ENCODE measurements at regions of chr13 and their contacts with region 1.

Region 1: GRCh38 chr13:112606109-112607001 is 18.4 kb upstream of the TUBGCP3 start:
- DNase-seq: peak; percentile 82

Region 2: GRCh38 chr13:112587212-112587763 is 19.1 kb before region 1 on chr13:
- CTCF ChIA-PET with region 1: interaction called, 4 read pairs
- POLR2A ChIA-PET with region 1: interaction called, 20 read pairs
- DNase-seq: peak; percentile 62

Region 3: DNA sequence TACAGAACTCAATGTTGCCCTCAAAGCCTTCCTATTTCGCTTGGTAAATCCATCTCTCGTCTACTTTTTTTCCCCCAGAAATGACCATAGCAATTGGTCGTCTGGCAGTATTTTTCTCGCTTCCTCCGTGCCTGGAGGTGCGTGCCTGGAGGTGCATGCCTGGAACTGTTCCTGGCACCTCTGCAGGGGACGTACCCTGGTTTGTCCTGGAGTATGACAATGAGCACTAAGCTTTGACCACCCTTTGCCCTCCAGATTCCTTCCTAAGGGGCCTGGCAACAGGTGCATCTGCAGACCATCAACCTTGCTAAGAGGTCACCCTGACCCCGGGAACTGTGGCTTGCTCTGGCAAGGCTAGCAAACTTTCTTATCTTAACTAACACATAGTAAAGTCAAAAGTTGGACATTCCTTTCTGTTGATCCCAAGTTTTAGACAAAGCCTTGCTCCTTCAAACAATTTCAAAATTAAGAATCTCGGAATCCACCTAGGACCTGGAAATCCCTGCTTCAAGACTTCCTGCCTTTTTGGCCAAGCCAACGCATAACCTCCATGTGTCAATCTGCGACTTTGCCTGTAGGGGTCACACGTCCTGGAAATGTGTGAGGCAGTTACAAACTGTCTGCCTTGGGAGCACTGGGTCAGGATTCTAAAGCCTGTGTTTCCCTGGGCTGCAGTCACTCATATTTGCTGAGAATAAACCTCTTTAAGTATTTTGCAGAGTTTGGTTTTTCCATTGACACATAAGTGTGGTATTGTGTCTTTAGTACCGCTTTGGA is 10.4 kb after region 1 on chr13:
- CTCF ChIA-PET with region 1: no interaction called
- POLR2A ChIA-PET with region 1: no interaction called
- DNase-seq: peak; percentile 50

Region 4: GRCh38 chr13:112725346-112726015 is 119.1 kb after region 1 on chr13:
- CTCF ChIA-PET with region 1: no interaction called
- POLR2A ChIA-PET with region 1: no interaction called
- DNase-seq: no peak

Region 5: DNA sequence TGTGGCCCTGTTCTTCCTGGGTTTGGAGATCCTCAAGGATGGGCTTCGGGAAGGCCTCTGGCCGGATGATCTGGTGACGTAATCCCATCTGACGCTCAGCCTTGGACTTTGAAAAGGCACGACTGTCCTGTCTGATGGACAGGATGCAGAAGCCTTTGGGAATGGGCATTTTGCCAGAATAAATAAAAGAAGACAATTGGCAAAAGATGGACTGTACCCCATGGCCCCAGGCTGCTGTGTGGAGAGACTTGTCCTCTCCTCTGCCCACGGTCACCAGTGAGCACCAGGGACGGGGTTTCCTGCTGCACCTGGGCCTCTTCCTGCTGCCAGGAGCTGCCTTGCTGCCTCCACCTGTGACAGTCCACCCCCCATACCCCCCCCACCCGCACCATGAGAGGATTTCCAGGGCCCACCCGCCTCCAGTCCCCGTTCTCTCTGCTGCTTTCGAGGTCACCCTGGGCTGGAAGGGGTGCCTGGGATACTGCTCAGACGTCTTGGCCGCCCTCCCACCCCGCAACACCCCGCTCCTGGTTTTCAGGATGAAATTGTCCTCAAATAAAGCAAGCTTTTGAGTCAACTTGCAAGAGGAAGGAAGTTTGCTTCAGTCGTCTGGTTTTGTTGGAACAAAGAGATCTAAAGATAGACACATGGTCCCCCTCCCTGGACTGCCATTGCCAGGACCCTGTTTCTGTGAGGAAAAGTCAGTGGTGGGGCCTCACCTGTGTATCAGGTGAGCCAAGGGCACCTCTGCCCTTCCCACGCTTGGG is 403.6 kb after region 1 on chr13:
- CTCF ChIA-PET with region 1: no interaction called
- POLR2A ChIA-PET with region 1: no interaction called
- DNase-seq: no peak

Measured in HEK293T (cell line).